ENCODE measurements at regions of chr3 and their contacts with region 1.

Region 1: GRCh38 chr3:38297947-38298711 is 16.0 kb downstream of the SLC22A14 start:
- DNase-seq: no peak
- H3K4me3 ChIP-seq: no peak overlapping the region
- CTCF ChIP-seq: peak; percentile 20

Region 2: GRCh38 chr3:38281895-38282675 is 16.0 kb before region 1 on chr3 and contains the start of gene SLC22A14:
- CTCF ChIA-PET with region 1: interaction called, 11 read pairs
- POLR2A ChIA-PET with region 1: no interaction called
- DNase-seq: no peak
- H3K4me3 ChIP-seq: no peak within 1 kb of the TSS
- CTCF ChIP-seq: no peak

Measured in AG04449 (cell line).